ENCODE measurements at regions of chr11 and their contacts with region 1.

Region 1: GRCh38 chr11:122743949-122744348 is 88.4 kb downstream of the UBASH3B start:
- DNase-seq: peak; percentile 93
- H3K4me3 Mint-ChIP-seq: no peak overlapping the region
- H3K27ac Mint-ChIP-seq: no peak overlapping the region
- H3K4me1 Mint-ChIP-seq: peaks cover 2% of the 10 kb centered on the region
- H3K27me3 Mint-ChIP-seq: peaks cover 12% of the 10 kb centered on the region

Region 2: DNA sequence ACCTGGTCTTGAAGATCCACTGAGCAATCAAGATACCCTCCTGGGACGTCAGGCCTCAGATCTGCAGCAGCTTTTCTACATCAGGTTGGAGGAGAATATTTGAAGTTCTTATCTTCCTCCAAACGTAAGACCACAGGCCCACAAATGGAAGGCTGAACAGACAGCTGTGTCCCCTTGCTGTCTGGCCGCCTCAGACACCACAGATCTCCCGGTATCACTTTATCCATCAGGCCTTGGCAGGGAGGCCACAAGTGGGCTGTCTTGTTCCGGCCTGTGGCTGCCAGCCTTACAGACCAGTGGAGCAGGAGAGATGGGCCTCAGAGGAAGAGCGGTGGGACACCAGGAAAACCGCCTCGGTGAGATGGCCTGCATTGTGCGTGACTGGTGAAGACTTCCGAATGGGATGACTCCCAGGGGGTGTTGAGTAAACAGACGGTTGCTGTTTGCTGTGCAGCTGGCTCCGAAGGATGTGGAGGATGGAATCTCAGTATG is 72.5 kb before region 1 on chr11:
- intact Hi-C with region 1: loop called (anchors 2 kb)
- DNase-seq: no peak
- H3K4me3 Mint-ChIP-seq: no peak overlapping the region
- H3K27ac Mint-ChIP-seq: no peak overlapping the region
- H3K4me1 Mint-ChIP-seq: peaks cover 34% of the 10 kb centered on the region
- H3K27me3 Mint-ChIP-seq: peaks cover 3% of the 10 kb centered on the region

Region 3: DNA sequence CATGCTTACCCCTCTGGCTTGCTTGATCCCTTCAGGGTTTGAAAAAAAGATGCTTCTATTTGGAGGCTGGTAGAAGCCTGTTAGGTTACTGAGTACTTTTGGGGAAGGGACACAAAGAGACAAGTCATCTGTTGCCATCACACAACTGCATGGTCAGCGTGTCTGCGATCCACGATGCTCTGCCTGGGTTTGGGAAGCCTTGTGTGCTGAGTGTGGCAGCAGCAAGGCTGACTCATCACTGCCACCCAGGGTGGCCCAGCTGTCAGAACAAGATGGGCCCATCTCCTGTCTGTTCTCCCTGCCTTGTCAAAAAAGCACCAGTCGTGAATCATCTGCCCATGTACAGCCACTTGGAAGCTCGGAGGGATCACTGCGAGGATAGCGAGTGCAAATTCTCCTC is 62.2 kb before region 1 on chr11:
- intact Hi-C with region 1: no loop called
- DNase-seq: no peak
- H3K4me3 Mint-ChIP-seq: no peak overlapping the region
- H3K27ac Mint-ChIP-seq: no peak overlapping the region
- H3K4me1 Mint-ChIP-seq: peaks cover 11% of the 10 kb centered on the region
- H3K27me3 Mint-ChIP-seq: peaks cover 6% of the 10 kb centered on the region

Region 4: GRCh38 chr11:122721964-122722266 is 22.0 kb before region 1 on chr11:
- intact Hi-C with region 1: loop called (anchors 1 kb)
- DNase-seq: peak; percentile 61
- H3K4me3 Mint-ChIP-seq: no peak overlapping the region
- H3K27ac Mint-ChIP-seq: peak overlapping the region; percentile 45
- H3K4me1 Mint-ChIP-seq: peaks cover 51% of the 10 kb centered on the region
- H3K27me3 Mint-ChIP-seq: peaks cover 14% of the 10 kb centered on the region

Region 5: GRCh38 chr11:122781378-122782195 is 37.6 kb after region 1 on chr11:
- intact Hi-C with region 1: loop called (anchors 2 kb)
- DNase-seq: peak; percentile 91
- H3K4me3 Mint-ChIP-seq: no peak overlapping the region
- H3K27ac Mint-ChIP-seq: no peak overlapping the region
- H3K4me1 Mint-ChIP-seq: peaks cover 16% of the 10 kb centered on the region
- H3K27me3 Mint-ChIP-seq: no peaks in the 10 kb centered on the region

Region 6: DNA sequence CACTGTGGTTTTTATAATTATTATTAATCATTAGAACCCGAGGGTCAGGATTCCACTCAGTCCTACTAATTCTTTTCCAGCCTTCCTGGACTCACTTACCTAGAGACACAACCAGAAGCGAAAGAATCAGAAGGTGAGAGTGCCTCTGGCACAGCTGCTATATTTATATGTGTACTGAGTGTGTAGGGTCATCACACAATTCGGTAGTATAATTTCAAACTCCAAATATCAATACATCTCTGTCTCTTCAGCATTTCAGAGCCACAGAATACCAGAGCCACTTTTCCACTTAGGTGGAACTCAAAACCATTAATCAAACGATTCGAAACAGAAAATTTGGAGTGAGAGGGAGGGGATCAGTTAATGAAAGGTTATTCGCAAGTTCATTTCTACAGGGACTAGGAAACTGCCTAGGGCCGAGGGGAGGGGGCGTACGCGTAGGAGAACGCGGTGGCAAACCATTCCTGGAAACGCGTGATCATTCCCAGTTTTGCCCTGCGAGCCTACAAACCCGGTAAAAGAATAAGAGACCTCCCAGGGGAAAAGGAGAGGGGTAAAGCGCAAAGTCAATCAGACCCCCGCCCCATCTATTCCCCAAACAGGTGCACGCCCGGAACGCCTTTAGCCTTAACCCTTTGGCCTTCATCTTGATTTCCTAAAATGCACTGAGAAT is 232.2 kb after region 1 on chr11:
- intact Hi-C with region 1: no loop called
- DNase-seq: no peak
- H3K4me3 Mint-ChIP-seq: peak overlapping the region; percentile 39
- H3K27ac Mint-ChIP-seq: peak overlapping the region; percentile 52
- H3K4me1 Mint-ChIP-seq: peaks cover 18% of the 10 kb centered on the region
- H3K27me3 Mint-ChIP-seq: peaks cover 72% of the 10 kb centered on the region